ENCODE measurements at regions of chr2 and their contacts with region 1.

Region 1: GRCh38 chr2:86135653-86136052 is 29.6 kb downstream of the PTCD3 start:
- DNase-seq: no peak
- H3K4me3 Mint-ChIP-seq: no peak overlapping the region
- H3K27ac Mint-ChIP-seq: peak overlapping the region; percentile 23
- H3K4me1 Mint-ChIP-seq: peaks cover 11% of the 10 kb centered on the region
- H3K27me3 Mint-ChIP-seq: no peaks in the 10 kb centered on the region

Region 2: DNA sequence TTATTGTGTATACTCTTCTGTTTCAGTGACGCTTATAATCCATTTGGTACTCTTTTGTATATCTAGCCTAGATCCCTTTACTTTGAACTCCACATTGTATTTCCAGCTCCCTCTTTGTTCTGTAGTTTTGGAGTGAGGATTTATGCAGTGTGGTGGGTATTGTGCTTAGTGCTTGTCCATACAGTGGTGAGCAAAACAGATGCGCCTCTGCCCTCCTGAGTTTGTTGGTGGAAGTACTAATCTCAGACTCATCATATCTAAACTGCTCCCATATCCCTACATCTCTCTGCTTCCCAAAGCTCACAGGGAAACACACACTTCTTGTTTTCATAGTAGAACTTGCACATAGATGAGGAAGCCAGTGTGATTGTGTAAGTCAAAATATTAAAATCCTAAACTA is 17.5 kb before region 1 on chr2:
- CTCF ChIA-PET with region 1: no interaction called
- POLR2A ChIA-PET with region 1: interaction called, 10 read pairs
- DNase-seq: no peak
- H3K4me3 Mint-ChIP-seq: no peak overlapping the region
- H3K27ac Mint-ChIP-seq: no peak overlapping the region
- H3K4me1 Mint-ChIP-seq: no peaks in the 10 kb centered on the region
- H3K27me3 Mint-ChIP-seq: no peaks in the 10 kb centered on the region